ENCODE measurements at regions of chr7 and their contacts with region 1.

Region 1: GRCh38 chr7:46786221-46786954 is 795.5 kb downstream of the TNS3 start:
- DNase-seq: peak; percentile 96
- ATAC-seq: peak; percentile 91
- H3K4me3 ChIP-seq: peak overlapping the region; percentile 31; the same call in 1 of the 2 replicates
- H3K27ac ChIP-seq: peak overlapping the region; percentile 96
- H3K4me1 ChIP-seq: peaks cover 38% of the 10 kb centered on the region
- H3K27me3 ChIP-seq: no peaks in the 10 kb centered on the region
- CTCF ChIP-seq: no peak; the same call in 1 of the 2 replicates

Region 2: GRCh38 chr7:46259947-46260624 is 526.3 kb before region 1 on chr7:
- CTCF ChIA-PET with region 1: no interaction called
- POLR2A ChIA-PET with region 1: no interaction called
- intact Hi-C with region 1: no loop called
- DNase-seq: peak; percentile 18
- ATAC-seq: 0 out of 2 replicates have a peak, but pooled peaks have one; percentile 29
- H3K4me3 ChIP-seq: no peak overlapping the region
- H3K27ac ChIP-seq: no peak overlapping the region
- H3K4me1 ChIP-seq: peaks cover 15% of the 10 kb centered on the region
- H3K27me3 ChIP-seq: no peaks in the 10 kb centered on the region
- CTCF ChIP-seq: no peak

Region 3: GRCh38 chr7:46486256-46487206 is 299.9 kb before region 1 on chr7:
- CTCF ChIA-PET with region 1: no interaction called
- POLR2A ChIA-PET with region 1: no interaction called
- intact Hi-C with region 1: loop called (anchors 1 kb)
- DNase-seq: peak; percentile 80
- ATAC-seq: peak; percentile 82
- H3K4me3 ChIP-seq: peak overlapping the region; percentile 7; the same call in 1 of the 2 replicates
- H3K27ac ChIP-seq: peak overlapping the region; percentile 88
- H3K4me1 ChIP-seq: peaks cover 39% of the 10 kb centered on the region
- H3K27me3 ChIP-seq: no peaks in the 10 kb centered on the region
- CTCF ChIP-seq: no peak

Region 4: DNA sequence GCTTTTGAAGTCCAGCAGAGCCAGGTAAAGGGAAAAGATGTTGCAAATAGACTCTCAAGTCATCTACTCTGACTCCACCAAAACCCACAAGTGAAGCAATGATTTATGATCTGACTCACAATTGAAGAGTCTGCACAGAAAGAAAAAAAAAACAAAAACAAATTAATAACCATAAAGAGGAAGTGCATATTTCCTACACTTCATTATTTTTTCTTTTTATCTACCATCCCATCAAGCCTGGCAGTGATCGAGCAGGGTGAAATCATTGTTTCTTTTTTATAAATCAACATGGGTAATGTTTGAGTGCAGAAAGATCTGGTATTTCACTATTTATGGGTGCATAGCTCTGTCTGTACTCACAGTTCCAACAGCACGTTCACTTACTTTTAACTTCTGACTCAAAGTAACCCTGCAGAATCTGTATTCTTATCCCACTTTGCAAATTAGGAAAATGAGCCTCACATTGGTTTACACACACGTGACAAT is 33.5 kb before region 1 on chr7:
- CTCF ChIA-PET with region 1: no interaction called
- POLR2A ChIA-PET with region 1: no interaction called
- intact Hi-C with region 1: loop called (anchors 1 kb)
- DNase-seq: peak; percentile 87
- ATAC-seq: peak; percentile 85
- H3K4me3 ChIP-seq: no peak overlapping the region
- H3K27ac ChIP-seq: peak overlapping the region; percentile 62
- H3K4me1 ChIP-seq: peaks cover 34% of the 10 kb centered on the region
- H3K27me3 ChIP-seq: no peaks in the 10 kb centered on the region
- CTCF ChIP-seq: no peak

Region 5: GRCh38 chr7:46811529-46811928 is 25.1 kb after region 1 on chr7:
- CTCF ChIA-PET with region 1: no interaction called
- POLR2A ChIA-PET with region 1: no interaction called
- intact Hi-C with region 1: loop called (anchors 1 kb)
- DNase-seq: peak; percentile 59
- ATAC-seq: peak; percentile 82
- H3K4me3 ChIP-seq: no peak overlapping the region
- H3K27ac ChIP-seq: peak overlapping the region; percentile 33
- H3K4me1 ChIP-seq: peaks cover 22% of the 10 kb centered on the region
- H3K27me3 ChIP-seq: no peaks in the 10 kb centered on the region
- CTCF ChIP-seq: no peak

Region 6: GRCh38 chr7:46908770-46909169 is 122.4 kb after region 1 on chr7:
- CTCF ChIA-PET with region 1: no interaction called
- POLR2A ChIA-PET with region 1: interaction called, 3 read pairs
- intact Hi-C with region 1: loop called (anchors 1 kb)
- DNase-seq: peak; percentile 80
- ATAC-seq: peak; percentile 78
- H3K4me3 ChIP-seq: peak overlapping the region; percentile 53
- H3K27ac ChIP-seq: peak overlapping the region; percentile 79
- H3K4me1 ChIP-seq: peaks cover 26% of the 10 kb centered on the region
- H3K27me3 ChIP-seq: no peaks in the 10 kb centered on the region
- CTCF ChIP-seq: no peak

Region 7: DNA sequence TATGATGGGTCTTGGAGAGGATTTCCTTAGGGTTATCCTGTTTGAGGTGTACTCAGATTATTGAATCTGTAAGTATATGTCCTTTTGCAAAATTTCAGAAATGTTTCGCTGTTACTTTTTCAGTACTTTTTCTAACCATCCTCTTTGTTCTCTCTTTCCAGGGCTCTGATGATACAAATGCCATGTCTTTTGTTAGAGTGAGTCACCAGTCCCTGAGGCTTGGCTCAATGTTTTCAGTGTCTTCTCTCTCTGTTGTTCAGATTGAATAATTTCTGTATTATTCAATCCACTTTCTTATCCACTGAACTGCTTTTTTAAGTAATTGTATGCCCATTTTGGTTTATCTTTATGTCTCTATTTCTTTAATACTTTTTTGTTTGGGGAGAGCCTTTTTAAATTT is 346.1 kb after region 1 on chr7:
- CTCF ChIA-PET with region 1: no interaction called
- POLR2A ChIA-PET with region 1: no interaction called
- intact Hi-C with region 1: no loop called
- DNase-seq: no peak
- ATAC-seq: no peak
- H3K4me3 ChIP-seq: no peak overlapping the region
- H3K27ac ChIP-seq: no peak overlapping the region
- H3K4me1 ChIP-seq: no peaks in the 10 kb centered on the region
- H3K27me3 ChIP-seq: peaks cover 11% of the 10 kb centered on the region
- CTCF ChIP-seq: no peak

Measured in PC-3 (cell line).